CD4-positive, alpha-beta T cell (primary cell): ENCODE measurements at regions of chr2 and their contacts with region 1.

Region 1: GRCh38 chr2:88919087-88919738 is 227.7 kb downstream of the RPIA start:
- DNase-seq: peak in 4 of 14 experiments; percentile 1 to 31 (median 14)
- ATAC-seq: peak; percentile 29
- H3K4me3 ChIP-seq: no peak overlapping the region
- H3K4me3 Mint-ChIP-seq: no peak overlapping the region
- H3K27ac ChIP-seq: no peak overlapping the region
- H3K27ac Mint-ChIP-seq: no peak overlapping the region
- H3K4me1 ChIP-seq: no peaks in the 10 kb centered on the region
- H3K4me1 Mint-ChIP-seq: no peaks in the 10 kb centered on the region
- H3K27me3 ChIP-seq: peaks cover 0 to 7% of the 10 kb centered on the region in 2 experiments
- H3K27me3 Mint-ChIP-seq: no peaks in the 10 kb centered on the region
- CTCF ChIP-seq: peak; percentile 28

Region 2: GRCh38 chr2:88739985-88740600 is 179.1 kb before region 1 on chr2:
- CTCF ChIA-PET with region 1: no interaction called
- POLR2A ChIA-PET with region 1: interaction called, 4 read pairs
- intact Hi-C with region 1: loop called (anchors 1 to 5 kb)
- DNase-seq: peak; percentile 49 to 84 (median 70)
- ATAC-seq: peak; percentile 97
- H3K4me3 ChIP-seq: no peak overlapping the region
- H3K4me3 Mint-ChIP-seq: no peak overlapping the region
- H3K27ac ChIP-seq: no peak overlapping the region
- H3K27ac Mint-ChIP-seq: peak overlapping the region; percentile 46
- H3K4me1 ChIP-seq: no peaks in the 10 kb centered on the region
- H3K4me1 Mint-ChIP-seq: peaks cover 19% of the 10 kb centered on the region
- H3K27me3 ChIP-seq: no peaks in the 10 kb centered on the region
- H3K27me3 Mint-ChIP-seq: no peaks in the 10 kb centered on the region
- CTCF ChIP-seq: peak; percentile 91

Region 3: DNA sequence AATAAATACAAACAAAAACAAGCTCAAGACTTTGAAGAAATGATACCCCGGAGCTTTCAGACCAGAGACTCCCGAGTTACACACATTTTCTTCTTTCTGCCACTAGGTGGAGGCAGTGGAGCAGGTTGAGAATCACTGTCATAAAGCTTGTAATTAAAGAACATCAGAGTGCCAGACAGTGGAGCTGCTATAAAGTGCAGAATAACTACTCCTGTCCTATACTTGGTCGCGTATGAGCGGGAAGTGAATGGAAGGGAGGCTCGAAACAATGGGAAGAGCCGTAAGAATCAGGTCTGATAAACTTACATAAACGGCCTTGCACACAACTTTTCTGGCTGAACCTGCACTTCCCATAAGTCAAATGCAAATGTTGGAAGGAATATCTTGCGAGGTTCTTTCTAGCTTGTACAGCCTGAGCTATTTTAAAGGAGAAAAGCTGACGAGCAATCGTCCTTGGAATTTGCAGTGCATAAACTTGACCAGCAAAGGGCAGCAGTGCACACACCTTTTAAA is 38.7 kb before region 1 on chr2:
- CTCF ChIA-PET with region 1: interaction called, 3 read pairs
- POLR2A ChIA-PET with region 1: no interaction called
- intact Hi-C with region 1: loop called in 1 of 2 experiments (anchors 1 kb)
- DNase-seq: peak in 6 of 14 experiments; percentile 4 to 71 (median 41)
- ATAC-seq: peak; percentile 64
- H3K4me3 ChIP-seq: no peak overlapping the region
- H3K4me3 Mint-ChIP-seq: no peak overlapping the region
- H3K27ac ChIP-seq: no peak overlapping the region
- H3K27ac Mint-ChIP-seq: no peak overlapping the region
- H3K4me1 ChIP-seq: peaks cover 2% of the 10 kb centered on the region
- H3K4me1 Mint-ChIP-seq: no peaks in the 10 kb centered on the region
- H3K27me3 ChIP-seq: no peaks in the 10 kb centered on the region
- H3K27me3 Mint-ChIP-seq: peaks cover 9% of the 10 kb centered on the region
- CTCF ChIP-seq: peak; percentile 89